ENCODE measurements at regions of chr11 and their contacts with region 1.

Region 1: GRCh38 chr11:36376888-36377758 is 81.0 kb downstream of the PRR5L start:
- DNase-seq: peak; percentile 67 to 76 (median 73)
- H3K4me3 ChIP-seq: peak overlapping the region; percentile 55 to 81
- H3K4me3 Mint-ChIP-seq: peak overlapping the region; percentile 79 to 98 (median 97)
- H3K27ac ChIP-seq: peak overlapping the region; percentile 46
- H3K27ac Mint-ChIP-seq: peak overlapping the region; percentile 81 to 96 (median 92)
- H3K4me1 ChIP-seq: peaks cover 51% of the 10 kb centered on the region
- H3K4me1 Mint-ChIP-seq: peaks cover 24 to 75% (median 50%) of the 10 kb centered on the region in 4 donors
- H3K27me3 ChIP-seq: no peaks in the 10 kb centered on the region
- H3K27me3 Mint-ChIP-seq: peaks cover 0 to 2% of the 10 kb centered on the region in 2 donors

Region 2: DNA sequence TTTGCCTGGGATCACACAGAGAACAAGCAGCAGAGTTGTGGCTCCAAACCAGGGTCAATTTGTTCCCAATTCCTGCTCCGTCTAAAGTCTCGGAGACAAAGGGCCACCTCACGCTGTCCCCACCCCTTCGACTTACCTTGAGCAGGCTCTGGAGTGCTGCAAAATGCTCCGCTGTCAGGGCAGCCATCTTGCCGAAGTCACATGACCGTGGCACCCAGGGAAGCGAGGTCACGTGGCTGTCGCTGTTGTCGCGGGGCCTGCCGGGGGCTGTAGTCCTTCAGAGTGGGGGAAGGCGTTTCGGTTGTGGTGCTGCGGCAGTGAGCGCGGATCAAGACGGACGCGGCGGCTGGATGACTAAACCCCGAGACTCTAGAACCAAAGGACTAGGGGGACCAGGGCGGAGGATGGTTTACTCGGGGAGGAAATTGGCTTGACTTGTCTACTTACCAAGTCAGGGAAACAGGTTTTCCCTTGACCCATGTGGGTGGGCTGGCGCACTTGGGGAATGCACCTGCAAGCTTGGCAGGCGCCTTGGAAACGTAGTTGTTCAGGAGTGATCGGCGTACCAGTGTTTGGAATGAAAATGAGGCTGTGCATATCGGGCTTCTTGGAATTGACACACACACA is 87.8 kb before region 1 on chr11 and contains the start of gene COMMD9:
- CTCF ChIA-PET with region 1: interaction called, 5 read pairs
- POLR2A ChIA-PET with region 1: no interaction called
- intact Hi-C with region 1: loop called (anchors 1 kb)
- DNase-seq: peak; percentile 89 to 96 (median 91)
- H3K4me3 ChIP-seq: peak within 1 kb of the TSS; percentile 73 to 95
- H3K4me3 Mint-ChIP-seq: peak within 1 kb of the TSS; percentile 88 to 97 (median 95)
- H3K27ac ChIP-seq: peak within 1 kb of the TSS; percentile 31
- H3K27ac Mint-ChIP-seq: peak within 1 kb of the TSS; percentile 65 to 96 (median 93)
- H3K4me1 ChIP-seq: peaks cover 19% of the 10 kb centered on the region
- H3K4me1 Mint-ChIP-seq: peaks cover 25 to 46% (median 37%) of the 10 kb centered on the region in 4 donors
- H3K27me3 ChIP-seq: no peaks in the 10 kb centered on the region
- H3K27me3 Mint-ChIP-seq: no peaks in the 10 kb centered on the region
- total RNA-seq, gene COMMD9: 33.9 to 41.4 TPM

Region 3: DNA sequence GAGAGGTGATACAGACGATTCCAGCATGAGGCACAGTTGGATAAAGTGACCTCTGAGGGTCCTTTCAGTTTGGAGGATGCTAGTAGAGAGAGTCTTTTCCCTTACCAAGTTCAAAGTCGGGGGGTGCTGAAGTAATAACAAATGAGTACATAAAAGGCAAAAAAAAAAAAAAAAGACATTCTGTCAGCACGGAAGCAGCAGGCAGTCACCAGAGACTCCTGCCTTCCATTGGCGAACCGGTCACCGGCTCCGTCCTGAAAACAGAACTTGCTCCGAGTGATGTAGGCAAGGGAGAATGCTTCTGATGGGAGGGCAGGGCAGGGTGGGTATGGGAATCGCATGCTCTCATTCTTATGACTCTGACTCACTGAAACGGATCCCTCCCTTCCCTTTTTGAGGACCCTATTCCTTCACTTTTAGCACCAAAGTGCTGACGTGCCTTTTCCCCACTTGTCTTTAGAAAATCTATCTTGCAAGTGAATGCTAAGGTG is 15.2 kb before region 1 on chr11:
- CTCF ChIA-PET with region 1: interaction called, 45 read pairs
- POLR2A ChIA-PET with region 1: interaction called, 53 read pairs
- intact Hi-C with region 1: loop called (anchors 1 kb)
- DNase-seq: no peak
- H3K4me3 ChIP-seq: no peak overlapping the region
- H3K4me3 Mint-ChIP-seq: peak overlapping the region; percentile 75 to 92 (median 84)
- H3K27ac ChIP-seq: no peak overlapping the region
- H3K27ac Mint-ChIP-seq: peak overlapping the region; percentile 72 to 87 (median 81)
- H3K4me1 ChIP-seq: peaks cover 73% of the 10 kb centered on the region
- H3K4me1 Mint-ChIP-seq: peaks cover 39 to 79% (median 63%) of the 10 kb centered on the region in 4 donors
- H3K27me3 ChIP-seq: no peaks in the 10 kb centered on the region
- H3K27me3 Mint-ChIP-seq: no peaks in the 10 kb centered on the region

Region 4: DNA sequence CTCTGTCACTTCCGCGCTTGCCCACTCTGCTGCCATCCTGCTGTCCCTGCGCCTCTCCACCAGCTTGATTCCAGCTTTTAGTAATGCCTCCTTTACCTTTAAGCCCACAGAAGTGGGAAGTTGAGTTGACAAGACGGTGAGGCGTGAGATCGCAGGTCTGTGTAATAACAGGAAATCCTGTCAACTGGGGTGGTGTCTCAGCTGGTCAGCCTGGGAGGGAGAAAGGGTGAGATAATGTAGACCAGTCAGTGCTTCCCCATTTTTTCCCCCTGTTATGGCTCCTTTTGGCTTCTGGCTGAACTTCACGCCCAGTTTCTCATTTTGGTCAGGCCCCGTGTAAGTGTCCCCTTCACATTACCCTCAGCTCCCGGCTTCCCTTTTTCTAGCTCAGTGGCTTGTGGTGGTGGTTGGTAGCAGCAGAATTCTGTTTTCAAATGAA is 34.1 kb after region 1 on chr11:
- CTCF ChIA-PET with region 1: interaction called, 39 read pairs
- POLR2A ChIA-PET with region 1: interaction called, 38 read pairs
- intact Hi-C with region 1: no loop called
- DNase-seq: no peak
- H3K4me3 ChIP-seq: no peak overlapping the region
- H3K4me3 Mint-ChIP-seq: peak overlapping the region; percentile 29 to 87 (median 72)
- H3K27ac ChIP-seq: peak overlapping the region; percentile 48
- H3K27ac Mint-ChIP-seq: peak overlapping the region; percentile 74 to 95 (median 89)
- H3K4me1 ChIP-seq: peaks cover 70% of the 10 kb centered on the region
- H3K4me1 Mint-ChIP-seq: peaks cover 53 to 79% (median 61%) of the 10 kb centered on the region in 4 donors
- H3K27me3 ChIP-seq: no peaks in the 10 kb centered on the region
- H3K27me3 Mint-ChIP-seq: no peaks in the 10 kb centered on the region

Region 5: DNA sequence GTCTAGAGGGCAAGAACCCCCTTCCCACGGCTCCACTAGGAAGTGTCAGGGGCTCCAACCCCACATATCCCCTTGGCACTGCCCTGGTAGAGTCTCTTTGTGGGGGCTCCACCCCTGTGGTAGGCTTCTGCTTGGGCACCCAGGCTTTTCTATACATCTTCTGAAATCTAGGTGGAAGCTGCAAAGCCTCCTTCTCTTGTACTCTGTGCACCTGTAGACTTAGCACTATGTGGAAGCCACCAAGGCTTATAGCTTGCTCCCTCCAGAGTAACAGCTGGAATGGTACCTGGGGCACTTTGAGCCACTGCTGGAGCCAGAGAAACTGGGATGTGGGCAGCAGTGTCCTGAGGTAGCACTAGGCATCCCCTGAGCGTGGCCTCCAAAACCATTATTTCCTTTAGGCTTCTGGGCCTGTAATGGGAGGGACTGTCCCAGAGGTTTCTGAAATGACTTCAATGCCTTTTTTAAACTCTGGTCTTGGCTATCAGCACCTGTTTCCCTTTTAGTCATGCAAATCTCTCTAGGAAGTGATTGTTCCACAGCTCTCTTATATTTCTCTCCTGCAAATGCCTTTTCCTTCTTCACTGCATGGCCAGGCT is 64.6 kb after region 1 on chr11:
- CTCF ChIA-PET with region 1: interaction called, 4 read pairs
- POLR2A ChIA-PET with region 1: interaction called, 12 read pairs
- intact Hi-C with region 1: no loop called
- DNase-seq: no peak
- H3K4me3 ChIP-seq: no peak overlapping the region
- H3K4me3 Mint-ChIP-seq: no peak overlapping the region
- H3K27ac ChIP-seq: no peak overlapping the region
- H3K27ac Mint-ChIP-seq: peak overlapping the region in 3 of 7 donors; percentile 10 to 27 (median 15)
- H3K4me1 ChIP-seq: no peaks in the 10 kb centered on the region
- H3K4me1 Mint-ChIP-seq: peaks cover 2 to 19% (median 10%) of the 10 kb centered on the region in 4 donors
- H3K27me3 ChIP-seq: no peaks in the 10 kb centered on the region
- H3K27me3 Mint-ChIP-seq: no peaks in the 10 kb centered on the region

Region 6: DNA sequence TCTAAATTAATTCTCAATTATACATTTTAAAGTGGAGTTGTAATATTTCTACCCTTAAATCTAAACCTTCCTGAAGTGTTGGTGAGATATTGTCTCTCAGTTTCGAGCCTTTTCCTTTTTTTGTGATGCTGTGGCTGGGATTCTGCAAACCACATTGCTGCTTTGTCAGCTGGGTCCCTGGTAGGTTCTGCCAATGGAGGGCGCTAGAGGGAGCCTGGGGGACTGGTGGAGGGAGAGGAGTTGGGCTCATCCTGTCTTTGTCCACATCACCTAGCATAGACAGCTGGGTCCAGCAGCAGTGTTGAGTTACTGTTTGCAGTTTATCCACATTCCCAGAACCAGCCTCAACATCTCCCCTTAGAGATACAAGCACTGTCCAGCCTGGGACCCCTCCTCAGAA is 91.9 kb after region 1 on chr11:
- CTCF ChIA-PET with region 1: interaction called, 5 read pairs
- POLR2A ChIA-PET with region 1: interaction called, 10 read pairs
- intact Hi-C with region 1: no loop called
- DNase-seq: no peak
- H3K4me3 ChIP-seq: no peak overlapping the region
- H3K4me3 Mint-ChIP-seq: no peak overlapping the region
- H3K27ac ChIP-seq: no peak overlapping the region
- H3K27ac Mint-ChIP-seq: peak overlapping the region in 2 of 7 donors; percentile 31 to 88
- H3K4me1 ChIP-seq: no peaks in the 10 kb centered on the region
- H3K4me1 Mint-ChIP-seq: peaks cover 2 to 8% (median 3%) of the 10 kb centered on the region in 4 donors
- H3K27me3 ChIP-seq: no peaks in the 10 kb centered on the region
- H3K27me3 Mint-ChIP-seq: no peaks in the 10 kb centered on the region

Region 7: DNA sequence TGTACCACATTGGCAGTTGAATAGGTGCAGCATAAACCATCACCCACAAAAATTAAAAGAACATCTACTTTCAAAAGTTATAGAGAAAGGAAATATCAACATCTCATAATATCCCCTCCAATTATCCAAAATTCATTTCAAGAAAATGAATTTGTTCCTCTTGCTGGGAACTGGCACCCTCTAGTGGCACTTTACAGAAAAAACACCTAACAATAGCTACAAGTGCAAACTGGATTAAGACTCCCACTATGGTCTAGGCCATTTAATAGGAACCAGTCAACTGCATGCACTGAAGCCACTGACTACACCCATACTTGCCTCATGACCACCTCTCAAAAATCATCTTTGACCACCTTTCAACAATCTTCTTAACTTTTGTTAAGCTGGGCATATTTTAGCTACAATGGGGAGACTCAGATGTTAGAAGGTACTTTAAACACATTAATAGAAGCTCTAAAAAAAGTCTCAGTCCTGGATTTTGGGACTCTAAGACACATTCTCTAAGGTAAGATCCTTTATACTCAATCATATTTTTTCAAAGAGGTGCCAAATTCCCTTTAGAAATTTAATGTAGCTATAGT is 115.7 kb after region 1 on chr11:
- CTCF ChIA-PET with region 1: interaction called, 17 read pairs
- POLR2A ChIA-PET with region 1: interaction called, 6 read pairs
- intact Hi-C with region 1: no loop called
- DNase-seq: peak in 4 of 5 donors; percentile 42 to 54 (median 46)
- H3K4me3 ChIP-seq: no peak overlapping the region
- H3K4me3 Mint-ChIP-seq: no peak overlapping the region
- H3K27ac ChIP-seq: no peak overlapping the region
- H3K27ac Mint-ChIP-seq: peak overlapping the region in 5 of 7 donors; percentile 18 to 76 (median 26)
- H3K4me1 ChIP-seq: peaks cover 13% of the 10 kb centered on the region
- H3K4me1 Mint-ChIP-seq: peaks cover 13 to 31% (median 17%) of the 10 kb centered on the region in 4 donors
- H3K27me3 ChIP-seq: no peaks in the 10 kb centered on the region
- H3K27me3 Mint-ChIP-seq: no peaks in the 10 kb centered on the region